Motor neuron (in vitro differentiated cells): ENCODE measurements at regions of chr7 and their contacts with region 1.

Region 1: DNA sequence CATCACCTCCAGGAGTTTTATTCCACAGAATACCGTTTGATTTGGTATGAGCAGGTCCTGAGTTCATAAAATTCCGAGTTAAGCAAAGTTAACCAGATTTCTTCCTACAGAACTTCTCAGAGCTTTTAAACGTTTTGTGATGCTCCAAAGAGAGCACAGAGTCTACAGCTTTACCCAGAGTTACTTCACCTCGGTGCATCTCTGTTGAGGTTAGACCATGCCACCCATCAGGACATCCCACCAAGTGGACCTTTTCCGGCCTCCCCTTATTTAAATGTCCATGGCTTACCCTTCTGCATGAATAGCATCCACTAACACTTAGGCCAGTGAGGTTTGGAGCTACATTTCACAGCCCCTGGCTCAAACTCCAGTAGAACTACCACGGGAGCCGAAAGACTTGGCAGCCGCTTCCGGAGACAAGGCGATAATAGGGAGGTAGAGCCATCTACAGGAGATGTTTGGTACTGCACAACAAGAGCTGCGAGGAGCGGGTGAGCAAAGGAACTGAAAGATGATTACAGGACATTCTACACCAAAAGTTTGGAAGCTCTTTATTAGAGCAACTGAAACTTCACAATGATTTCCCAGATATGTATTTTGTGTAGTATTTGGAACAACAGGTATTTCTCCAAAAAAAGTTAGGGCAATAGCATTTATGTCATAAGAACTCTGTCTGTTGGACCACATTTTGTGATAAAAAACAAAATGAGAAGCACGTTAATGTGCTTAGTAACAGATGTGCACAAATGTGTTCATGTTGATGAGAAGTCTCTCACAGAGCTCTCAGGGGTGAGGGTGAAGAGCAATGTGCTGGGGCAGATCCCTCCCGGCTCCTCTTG is 174.7 kb downstream of the HERPUD2 start:
- ATAC-seq: peak; percentile 53 to 86 (median 72)
- H3K4me3 ChIP-seq: no peak overlapping the region
- H3K27ac ChIP-seq: no peak overlapping the region
- H3K4me1 ChIP-seq: no peaks in the 10 kb centered on the region

Region 2: DNA sequence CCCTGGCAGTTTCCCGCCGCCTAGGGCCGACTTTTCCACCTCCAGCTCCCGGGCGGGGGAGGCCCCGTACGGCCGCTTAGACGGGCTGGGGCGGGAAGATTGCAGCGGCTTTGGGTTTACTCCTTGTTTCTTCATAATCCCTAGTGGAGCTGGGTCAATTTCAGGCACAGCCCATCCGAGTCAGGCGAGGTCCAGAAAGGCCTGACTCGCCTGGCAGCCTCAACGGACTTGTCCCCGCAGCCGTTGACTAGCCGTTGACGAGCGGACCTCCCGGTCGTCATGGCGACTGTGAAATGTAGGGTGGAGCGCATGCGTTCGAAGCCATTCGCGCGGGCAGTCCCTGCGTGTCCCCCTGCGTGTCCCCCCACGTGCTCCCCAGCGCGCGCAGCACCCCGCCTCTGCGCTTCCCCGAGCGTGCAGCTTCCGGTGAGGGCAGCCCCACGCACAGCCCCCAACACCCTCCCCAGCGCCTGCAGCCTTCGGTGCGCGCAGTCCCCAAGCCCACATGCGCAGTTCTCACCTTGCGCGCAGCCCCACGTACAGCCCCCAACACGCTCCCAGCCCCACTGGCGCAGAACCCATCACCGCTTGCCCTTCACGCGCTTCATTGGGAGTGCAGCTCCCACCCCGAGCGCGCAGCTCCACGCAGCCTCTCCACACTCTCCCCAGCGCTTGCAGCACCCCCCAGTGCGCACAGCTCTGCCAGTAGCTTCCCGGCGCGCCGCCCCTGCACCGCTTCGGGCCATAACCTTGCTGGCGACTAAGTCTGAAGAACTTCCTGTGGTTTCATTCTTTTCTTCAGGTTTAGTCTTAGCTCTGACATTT is 334.1 kb before region 1 on chr7:
- in situ Hi-C with region 1: loop called in 1 of 9 experiments (anchors 25 kb)
- ATAC-seq: peak; percentile 53 to 96 (median 93)
- H3K4me3 ChIP-seq: peak overlapping the region; percentile 39 to 65 (median 46)
- H3K27ac ChIP-seq: no peak overlapping the region
- H3K4me1 ChIP-seq: peaks cover 3 to 4% of the 10 kb centered on the region in 2 donors

Region 3: DNA sequence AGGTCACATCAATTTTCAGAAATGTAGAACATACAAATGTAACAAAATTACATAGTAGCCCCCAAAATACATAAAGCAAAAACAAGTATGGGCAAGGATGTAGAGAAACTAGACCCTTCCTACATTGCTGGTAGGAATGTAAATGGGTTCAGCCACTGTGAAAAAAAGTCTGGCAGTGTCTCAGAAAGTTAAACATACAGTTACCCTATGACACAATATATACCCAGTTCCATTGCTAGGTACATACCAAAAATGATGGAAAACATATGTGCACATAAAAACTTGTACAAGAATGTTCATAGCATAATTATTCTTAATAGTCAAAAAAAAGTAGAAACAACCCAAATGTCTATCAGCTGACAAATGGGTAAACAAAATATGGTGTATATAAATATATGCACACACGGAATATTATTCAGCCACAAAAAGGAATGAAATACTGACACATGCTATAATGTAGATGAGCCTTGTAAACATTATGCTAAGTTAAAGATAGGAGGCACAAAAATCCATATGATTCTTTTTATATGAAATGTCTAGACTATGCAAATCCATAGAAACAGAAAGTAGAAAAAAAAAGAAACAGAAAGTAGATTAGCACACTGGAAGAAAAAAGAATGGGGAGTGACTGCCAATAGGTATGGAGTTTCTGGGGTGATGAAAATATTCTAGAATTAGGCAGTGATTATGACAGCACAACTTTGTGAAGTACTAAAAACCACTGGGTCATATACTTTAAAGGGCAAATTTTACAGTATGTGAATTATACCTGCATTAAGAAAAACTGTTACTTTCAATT is 161.2 kb after region 1 on chr7:
- in situ Hi-C with region 1: no loop called
- ATAC-seq: peak in 1 of 8 experiments; percentile 27
- H3K4me3 ChIP-seq: no peak overlapping the region
- H3K27ac ChIP-seq: no peak overlapping the region
- H3K4me1 ChIP-seq: peaks cover 0 to 3% of the 10 kb centered on the region in 2 donors